ENCODE measurements at regions of chr1 and their contacts with region 1.

Region 1: DNA sequence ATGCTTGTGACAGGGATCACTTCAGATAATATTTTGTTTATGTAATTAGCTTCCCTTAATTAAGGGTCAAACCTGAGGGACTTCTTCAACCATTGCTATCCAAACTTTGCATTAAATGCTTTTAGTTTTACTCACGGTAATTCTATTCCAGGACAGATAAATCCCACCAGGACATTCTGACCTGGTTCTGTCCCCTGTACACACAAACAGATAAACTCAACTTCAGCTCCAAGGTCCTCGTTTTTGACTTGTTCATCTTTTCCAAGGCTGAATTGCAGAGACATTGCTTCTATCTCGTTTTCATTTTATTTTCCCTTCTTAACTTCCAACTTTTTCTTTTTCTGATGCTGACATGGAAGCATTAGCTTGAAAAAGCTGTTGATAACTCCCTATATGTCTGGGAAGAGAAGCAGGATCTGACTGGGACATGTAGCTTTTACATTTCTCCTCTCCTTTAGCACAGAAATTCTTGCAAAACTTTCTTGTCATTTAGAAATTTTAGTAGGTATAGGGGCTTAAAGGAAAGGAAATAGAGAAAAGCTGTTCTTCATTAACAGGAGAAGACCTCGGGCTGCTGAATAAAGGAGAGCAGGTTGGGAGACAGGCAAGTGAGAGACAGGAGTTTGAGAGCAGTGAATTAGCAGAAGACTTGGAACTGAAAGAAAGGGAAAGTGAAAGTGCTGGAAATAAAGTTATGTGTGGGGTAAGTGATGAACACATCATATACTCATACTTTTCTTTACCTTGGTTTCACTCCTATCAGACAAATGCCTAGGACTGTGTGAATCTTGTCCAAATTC is 231.7 kb upstream of the B3GALT2 start:
- DNase-seq: peak in 2 of 9 experiments; percentile 49 to 67
- ATAC-seq: peak; percentile 78
- H3K4me3 ChIP-seq: peak overlapping the region; percentile 42 to 49
- H3K4me3 Mint-ChIP-seq: peak overlapping the region; percentile 80
- H3K27ac ChIP-seq: peak overlapping the region; percentile 34 to 46
- H3K27ac Mint-ChIP-seq: peak overlapping the region; percentile 87
- H3K4me1 ChIP-seq: peaks cover 14% of the 10 kb centered on the region
- H3K4me1 Mint-ChIP-seq: peaks cover 39% of the 10 kb centered on the region
- H3K27me3 ChIP-seq: no peaks in the 10 kb centered on the region
- H3K27me3 Mint-ChIP-seq: no peaks in the 10 kb centered on the region
- CTCF ChIP-seq: no peak

Region 2: DNA sequence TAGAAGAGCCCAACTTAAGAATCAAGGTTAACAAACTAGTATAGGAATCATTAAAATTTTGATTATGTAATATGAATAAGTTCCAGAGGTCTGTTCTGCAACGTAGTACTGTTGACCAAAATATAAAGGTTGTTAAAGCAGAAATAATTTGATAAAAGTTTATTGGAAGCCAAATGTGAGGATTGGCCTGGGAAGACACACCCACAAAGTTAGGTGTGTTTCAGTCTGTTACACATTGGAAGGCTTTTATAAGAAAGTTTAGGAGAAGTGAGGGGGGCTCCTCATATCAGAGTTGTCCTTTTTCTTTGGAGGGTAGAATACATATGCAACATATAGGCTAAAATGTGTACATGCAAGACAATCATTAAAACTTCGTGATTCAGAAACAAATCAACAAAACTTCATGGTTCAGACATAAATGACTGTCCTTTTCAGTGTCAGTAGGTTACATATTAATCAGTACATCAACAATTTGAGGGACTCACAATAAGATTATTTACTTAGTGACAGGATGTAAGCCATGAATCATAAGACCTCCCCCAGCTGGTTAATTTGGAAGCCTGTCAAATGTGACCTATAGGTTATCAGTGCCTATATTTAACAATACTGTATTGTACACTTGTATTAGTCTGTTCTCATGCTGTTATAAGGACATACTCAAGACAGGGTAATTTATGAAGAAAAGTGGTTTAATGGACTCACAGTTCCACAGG is 13.3 kb after region 1 on chr1:
- CTCF ChIA-PET with region 1: interaction called, 3 read pairs
- POLR2A ChIA-PET with region 1: no interaction called
- intact Hi-C with region 1: loop called in 1 of 2 experiments (anchors 2 kb)
- DNase-seq: no peak
- ATAC-seq: no peak
- H3K4me3 ChIP-seq: no peak overlapping the region
- H3K4me3 Mint-ChIP-seq: no peak overlapping the region
- H3K27ac ChIP-seq: no peak overlapping the region
- H3K27ac Mint-ChIP-seq: no peak overlapping the region
- H3K4me1 ChIP-seq: no peaks in the 10 kb centered on the region
- H3K4me1 Mint-ChIP-seq: peaks cover 9% of the 10 kb centered on the region
- H3K27me3 ChIP-seq: no peaks in the 10 kb centered on the region
- H3K27me3 Mint-ChIP-seq: no peaks in the 10 kb centered on the region
- CTCF ChIP-seq: no peak